Activated CD4-positive, alpha-beta memory T cell treated with anti-CD3 and anti-CD28 coated beads, Interleukin-2, amount 10 ng/mL, durations not matched to agents 7 days and 5 days (primary cell): ENCODE measurements at regions of chr5 and their contacts with region 1.

Region 1: GRCh38 chr5:135560858-135561257 is 17.9 kb downstream of the CXCL14 start:
- DNase-seq: peak; percentile 72
- H3K4me3 Mint-ChIP-seq: no peak overlapping the region
- H3K27ac Mint-ChIP-seq: no peak overlapping the region
- H3K4me1 Mint-ChIP-seq: peaks cover 2% of the 10 kb centered on the region
- H3K27me3 Mint-ChIP-seq: peaks cover 33% of the 10 kb centered on the region

Region 2: GRCh38 chr5:135457424-135458071 is 103.3 kb before region 1 on chr5:
- CTCF ChIA-PET with region 1: interaction called, 211 read pairs
- POLR2A ChIA-PET with region 1: no interaction called
- DNase-seq: peak; percentile 68
- H3K4me3 Mint-ChIP-seq: no peak overlapping the region
- H3K27ac Mint-ChIP-seq: no peak overlapping the region
- H3K4me1 Mint-ChIP-seq: peaks cover 3% of the 10 kb centered on the region
- H3K27me3 Mint-ChIP-seq: peaks cover 36% of the 10 kb centered on the region

Region 3: DNA sequence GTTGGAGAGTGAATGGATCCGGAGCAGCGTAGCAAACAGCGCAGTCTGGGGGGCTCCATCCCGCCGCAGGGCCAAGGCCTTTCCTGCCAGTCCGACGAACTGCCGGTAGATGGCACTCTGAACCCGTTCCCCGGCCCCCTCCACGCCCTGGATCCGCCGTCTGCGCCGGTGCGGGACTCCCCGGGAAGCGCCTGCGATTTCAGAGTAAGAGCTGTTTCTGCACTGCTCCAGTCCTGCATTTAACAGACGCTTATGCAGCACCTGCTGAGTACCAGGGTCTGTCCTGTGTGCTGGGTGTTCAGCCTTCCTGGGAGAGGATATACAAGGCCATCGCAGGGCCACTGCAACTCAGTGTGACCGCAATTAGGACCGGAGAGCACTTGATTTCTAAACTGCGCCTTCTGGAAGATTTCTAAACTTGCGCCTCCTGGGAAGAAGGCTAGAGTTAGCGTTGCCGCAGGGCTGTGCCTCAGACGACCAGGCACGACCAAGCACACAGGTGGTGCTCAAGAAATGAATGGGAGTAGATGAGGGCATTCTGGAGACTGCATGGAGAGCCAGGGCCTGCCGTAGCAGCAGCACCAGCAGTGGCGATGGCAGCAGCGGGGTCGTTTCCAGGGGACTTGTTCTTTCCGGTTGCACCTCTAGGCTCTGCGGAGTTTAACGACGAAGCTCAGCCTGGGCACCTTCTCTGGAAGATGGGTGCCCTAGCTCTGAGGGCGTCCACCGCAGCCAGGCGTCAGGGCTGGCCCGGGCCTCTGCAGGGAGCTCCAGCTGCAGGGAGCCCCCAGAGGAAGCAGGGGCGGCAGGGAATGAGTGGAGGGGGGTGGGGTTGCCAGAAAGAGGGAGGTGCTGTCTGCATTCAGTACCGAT is 94.4 kb before region 1 on chr5:
- CTCF ChIA-PET with region 1: interaction called, 211 read pairs
- POLR2A ChIA-PET with region 1: no interaction called
- DNase-seq: peak; percentile 70
- H3K4me3 Mint-ChIP-seq: peak overlapping the region; percentile 16
- H3K27ac Mint-ChIP-seq: no peak overlapping the region
- H3K4me1 Mint-ChIP-seq: peaks cover 7% of the 10 kb centered on the region
- H3K27me3 Mint-ChIP-seq: peaks cover 49% of the 10 kb centered on the region

Region 4: GRCh38 chr5:135829681-135830383 is 269.0 kb after region 1 on chr5:
- CTCF ChIA-PET with region 1: interaction called, 19 read pairs
- POLR2A ChIA-PET with region 1: no interaction called
- DNase-seq: peak; percentile 55
- H3K4me3 Mint-ChIP-seq: no peak overlapping the region
- H3K27ac Mint-ChIP-seq: no peak overlapping the region
- H3K4me1 Mint-ChIP-seq: no peaks in the 10 kb centered on the region
- H3K27me3 Mint-ChIP-seq: peaks cover 16% of the 10 kb centered on the region